Heart right ventricle (tissue), 16 donors: ENCODE measurements at regions of chr5 and their contacts with region 1.

Region 1: DNA sequence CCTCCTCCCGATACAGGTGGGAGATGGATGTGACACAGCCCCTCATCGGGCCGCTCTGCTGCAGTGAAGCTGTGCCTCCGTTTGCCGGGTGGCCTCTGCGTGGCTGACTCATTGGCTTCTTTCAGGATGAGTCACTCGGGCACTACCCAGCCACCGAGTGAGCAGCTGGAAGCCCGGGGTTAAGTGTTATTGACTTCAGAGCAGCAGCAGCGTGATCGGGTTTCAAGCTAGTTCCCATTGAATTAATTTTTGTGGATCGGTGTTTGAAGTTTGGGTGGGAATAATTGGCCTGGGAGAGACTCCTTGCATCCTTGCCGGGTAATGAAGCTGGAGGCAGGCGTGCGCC is 266.4 kb upstream of the IRX4 start:
- DNase-seq: no peak
- ATAC-seq: no peak
- H3K4me3 ChIP-seq: no peak overlapping the region
- H3K27ac ChIP-seq: no peak overlapping the region
- H3K4me1 ChIP-seq: no peaks in the 10 kb centered on the region
- H3K27me3 ChIP-seq: peaks cover 0 to 15% (median 9%) of the 10 kb centered on the region in 7 donors
- CTCF ChIP-seq: no peak

Region 2: GRCh38 chr5:1975898-1976765 is 173.0 kb before region 1 on chr5:
- intact Hi-C with region 1: loop called in 1 of 10 experiments (anchors 10 kb)
- DNase-seq: no peak
- ATAC-seq: no peak
- H3K4me3 ChIP-seq: no peak overlapping the region
- H3K27ac ChIP-seq: no peak overlapping the region
- H3K4me1 ChIP-seq: no peaks in the 10 kb centered on the region
- H3K27me3 ChIP-seq: no peaks in the 10 kb centered on the region
- CTCF ChIP-seq: peak in 7 of 9 donors; percentile 26 to 49 (median 36)